H1 (cell line): ENCODE measurements at regions of chr22 and their contacts with region 1.

Region 1: GRCh38 chr22:39003165-39003638 is 10.9 kb upstream of the APOBEC3C start:
- DNase-seq: peak in 1 of 2 experiments; percentile 77
- H3K4me3 ChIP-seq: no peak overlapping the region
- H3K27ac ChIP-seq: no peak overlapping the region
- H3K4me1 ChIP-seq: peaks cover 0 to 9% (median 2%) of the 10 kb centered on the region in 4 experiments; a peak in 3 of 7 replicates
- H3K27me3 ChIP-seq: no peaks in the 10 kb centered on the region; a peak in 2 of 7 replicates
- CTCF ChIP-seq: peak; percentile 66 to 86 (median 82)
- EP300 ChIP-seq: no peak
- POLR2A ChIP-seq: no peak
- RAD21 ChIP-seq: peak; percentile 58 to 76

Region 2: GRCh38 chr22:38953577-38954413 is 49.4 kb before region 1 on chr22:
- CTCF ChIA-PET with region 1: no interaction called
- POLR2A ChIA-PET with region 1: no interaction called
- DNase-seq: no peak
- H3K4me3 ChIP-seq: no peak overlapping the region
- H3K27ac ChIP-seq: no peak overlapping the region
- H3K4me1 ChIP-seq: no peaks in the 10 kb centered on the region
- H3K27me3 ChIP-seq: no peaks in the 10 kb centered on the region; a peak in 1 of 7 replicates
- CTCF ChIP-seq: no peak
- EP300 ChIP-seq: no peak
- POLR2A ChIP-seq: no peak
- RAD21 ChIP-seq: no peak

Region 3: GRCh38 chr22:38973289-38974169 is 29.7 kb before region 1 on chr22:
- CTCF ChIA-PET with region 1: interaction called, 51 read pairs
- POLR2A ChIA-PET with region 1: interaction called, 4 read pairs
- DNase-seq: peak; percentile 25 to 80
- H3K4me3 ChIP-seq: no peak overlapping the region
- H3K27ac ChIP-seq: no peak overlapping the region
- H3K4me1 ChIP-seq: peaks cover 0 to 4% (median under 1%) of the 10 kb centered on the region in 4 experiments; a peak in 2 of 7 replicates
- H3K27me3 ChIP-seq: no peaks in the 10 kb centered on the region; a peak in 2 of 7 replicates
- CTCF ChIP-seq: peak; percentile 89 to 98 (median 89)
- EP300 ChIP-seq: no peak
- POLR2A ChIP-seq: no peak
- RAD21 ChIP-seq: peak; percentile 85 to 86

Region 4: GRCh38 chr22:38981992-38982927 is 20.9 kb before region 1 on chr22 and contains the start of gene APOBEC3B:
- CTCF ChIA-PET with region 1: interaction called, 23 read pairs
- POLR2A ChIA-PET with region 1: interaction called, 3 read pairs
- DNase-seq: no peak
- H3K4me3 ChIP-seq: peak within 1 kb of the TSS in 1 of 4 experiments; percentile 39; a peak in 2 of 8 replicates
- H3K27ac ChIP-seq: peak within 1 kb of the TSS; percentile 54; the same call in 1 of the 2 replicates
- H3K4me1 ChIP-seq: peaks cover 0 to 16% (median 4%) of the 10 kb centered on the region in 4 experiments; a peak in 6 of 7 replicates
- H3K27me3 ChIP-seq: no peaks in the 10 kb centered on the region
- CTCF ChIP-seq: no peak
- EP300 ChIP-seq: no peak
- POLR2A ChIP-seq: no peak; a peak in 1 of 3 replicates
- RAD21 ChIP-seq: no peak
- total RNA-seq, gene APOBEC3B: 14.2 and 16.3 TPM in 2 replicates

Region 5: GRCh38 chr22:39013942-39014722 is 10.9 kb after region 1 on chr22 and contains the start of gene APOBEC3C:
- CTCF ChIA-PET with region 1: interaction called, 10 read pairs
- POLR2A ChIA-PET with region 1: interaction called, 12 read pairs
- DNase-seq: peak in 1 of 2 experiments; percentile 68
- H3K4me3 ChIP-seq: peak within 1 kb of the TSS in 2 of 4 experiments; percentile 4 to 48; a peak in 3 of 8 replicates
- H3K27ac ChIP-seq: no peak within 1 kb of the TSS; the same call in 1 of the 2 replicates
- H3K4me1 ChIP-seq: peaks cover 2 to 31% (median 18%) of the 10 kb centered on the region in 4 experiments
- H3K27me3 ChIP-seq: no peaks in the 10 kb centered on the region
- CTCF ChIP-seq: no peak
- EP300 ChIP-seq: no peak
- POLR2A ChIP-seq: peak in 1 of 2 experiments; percentile 33; a peak in 1 of 3 replicates
- RAD21 ChIP-seq: peak in 1 of 2 experiments; percentile 36; a peak in 2 of 4 replicates
- total RNA-seq, gene APOBEC3C: 23.3 and 23.7 TPM in 2 replicates